Activated T-helper 1 cell treated with anti-CD3 and anti-CD28 coated beads, Interleukin-12 subunit alpha, Interleukin-12 subunit beta, Interleukin-2, Interleukin-4 antibody, amounts not matched to agents 30 ng/mL and 10 ng/mL and 1 ng/mL, durations not matched to agents 14 hours and 24 hours and 36 hours (primary cell): ENCODE measurements at regions of chr12 and their contacts with region 1.

Region 1: GRCh38 chr12:57063991-57064685 is 14.2 kb upstream of the MYO1A start:
- DNase-seq: peak; percentile 57
- H3K4me3 Mint-ChIP-seq: peak overlapping the region; percentile 82
- H3K27ac Mint-ChIP-seq: peak overlapping the region; percentile 94
- H3K4me1 Mint-ChIP-seq: peaks cover 54% of the 10 kb centered on the region
- H3K27me3 Mint-ChIP-seq: no peaks in the 10 kb centered on the region

Region 2: DNA sequence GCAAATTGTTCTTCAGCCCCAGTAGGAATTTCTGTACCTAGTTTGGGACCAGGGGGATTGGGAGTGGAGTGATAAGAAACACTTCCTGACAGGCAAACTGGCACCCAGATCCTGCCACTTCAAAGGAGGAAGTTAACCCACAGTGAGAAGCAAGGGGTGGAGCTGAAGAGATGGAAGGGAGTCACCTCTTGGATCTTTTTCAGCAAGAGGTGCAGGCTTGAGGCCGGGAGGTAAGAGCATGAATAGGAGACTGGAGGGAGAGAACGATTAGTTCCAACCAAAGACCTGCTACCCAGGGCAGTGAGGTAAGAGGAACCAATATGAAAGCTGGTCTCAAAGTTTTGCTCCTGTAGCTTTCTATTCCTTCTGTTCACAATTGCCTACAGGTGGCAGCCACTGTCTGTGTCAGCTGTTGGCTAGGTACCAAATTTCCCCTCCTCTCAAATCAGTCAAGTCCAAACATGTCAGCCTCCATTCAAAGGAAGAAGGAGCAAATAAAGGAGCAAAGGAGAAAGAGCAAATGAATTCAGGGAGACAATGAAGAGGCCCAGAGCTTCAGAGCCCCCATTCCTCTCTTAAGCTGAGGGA is 32.9 kb before region 1 on chr12:
- intact Hi-C with region 1: loop called (anchors 1 kb)
- DNase-seq: no peak
- H3K4me3 Mint-ChIP-seq: no peak overlapping the region
- H3K27ac Mint-ChIP-seq: peak overlapping the region; percentile 18
- H3K4me1 Mint-ChIP-seq: peaks cover 34% of the 10 kb centered on the region
- H3K27me3 Mint-ChIP-seq: no peaks in the 10 kb centered on the region

Region 3: DNA sequence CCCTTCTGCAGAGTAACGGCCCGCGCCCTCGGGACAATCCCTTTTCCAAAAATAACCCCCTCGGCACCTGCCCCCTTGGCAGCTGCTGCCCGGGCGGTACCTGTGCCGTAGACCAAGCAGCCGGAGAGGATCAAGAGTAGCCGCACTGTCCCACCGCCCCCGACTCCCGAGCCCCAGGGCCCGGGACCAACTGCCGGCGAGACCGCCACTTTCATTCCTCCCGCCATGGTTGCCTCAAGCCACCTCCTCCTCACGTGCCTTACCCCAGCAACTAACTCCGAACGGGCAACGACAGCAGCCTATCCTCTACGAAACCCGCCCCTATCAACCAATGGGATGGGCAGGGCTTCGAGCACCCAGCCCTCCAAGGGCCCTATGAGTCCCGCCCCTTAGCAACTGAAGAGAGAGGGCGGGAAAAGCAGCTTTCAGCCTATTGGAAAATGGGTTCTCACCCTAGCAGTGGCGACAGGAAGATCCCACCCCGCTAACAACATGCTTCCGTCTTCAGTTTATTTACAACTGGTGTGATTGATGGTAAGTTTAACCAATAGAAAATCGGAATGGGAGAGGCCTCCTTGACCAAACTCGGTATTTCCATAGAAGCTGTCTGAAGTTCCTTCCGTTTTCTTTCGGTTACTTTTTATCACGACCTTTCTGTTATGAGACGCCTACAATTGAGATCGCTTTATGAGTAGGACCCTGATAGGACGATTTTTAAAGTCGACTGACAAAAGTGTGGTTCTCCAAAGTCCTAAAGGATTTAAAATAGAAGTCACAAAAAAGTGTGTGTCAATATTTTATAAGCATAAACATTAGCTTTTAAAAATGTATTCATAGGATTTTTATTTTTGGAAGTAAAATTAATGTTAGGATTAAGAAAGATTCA is 14.6 kb after region 1 on chr12 and contains the start of gene NEMP1:
- intact Hi-C with region 1: loop called (anchors 1 kb)
- DNase-seq: peak; percentile 97
- H3K4me3 Mint-ChIP-seq: peak within 1 kb of the TSS; percentile 89
- H3K27ac Mint-ChIP-seq: peak within 1 kb of the TSS; percentile 92
- H3K4me1 Mint-ChIP-seq: peaks cover 16% of the 10 kb centered on the region
- H3K27me3 Mint-ChIP-seq: no peaks in the 10 kb centered on the region
- total RNA-seq, gene NEMP1: 70.2 and 71.7 TPM in 2 replicates